ENCODE measurements at regions of chr6 and their contacts with region 1.

Region 1: DNA sequence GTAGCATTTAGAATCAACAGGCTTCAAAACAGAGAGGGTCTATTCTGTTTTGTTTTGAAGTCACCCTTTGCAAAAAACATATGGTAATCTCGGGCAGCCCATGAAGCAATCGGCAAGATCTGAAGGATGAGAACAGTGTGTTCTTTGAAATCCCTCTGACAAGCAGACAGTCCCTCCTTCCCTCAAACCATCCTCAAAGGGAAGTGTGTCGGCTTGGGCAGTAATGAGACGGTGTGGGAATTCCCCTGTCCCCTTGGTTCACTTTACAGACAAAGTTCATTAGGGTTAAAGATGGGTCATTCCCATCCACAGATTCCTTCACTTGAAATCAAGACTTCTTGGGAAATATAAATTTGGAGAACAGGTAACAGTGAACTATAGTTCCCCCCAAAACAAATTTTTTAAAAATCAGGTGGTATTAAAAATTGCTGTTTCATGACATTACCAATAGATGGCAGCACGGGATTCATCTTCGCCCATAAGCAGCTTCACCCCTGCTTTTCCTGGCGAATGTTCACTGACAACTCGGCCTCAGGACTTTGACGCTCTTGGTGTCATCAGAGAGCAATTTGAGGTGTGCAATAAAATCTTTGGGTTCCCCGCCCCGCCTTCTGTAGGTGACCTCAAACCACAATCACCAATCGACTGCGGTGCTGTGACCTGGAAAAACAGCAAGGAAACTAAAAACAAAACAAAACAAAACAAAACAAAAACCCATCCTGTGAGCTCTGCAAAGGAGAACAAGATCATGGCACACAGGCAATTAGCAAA is 159.3 kb upstream of the TNFAIP3 start:
- DNase-seq: peak; percentile 89
- H3K4me3 Mint-ChIP-seq: peak overlapping the region; percentile 58
- H3K27ac Mint-ChIP-seq: peak overlapping the region; percentile 86
- H3K4me1 Mint-ChIP-seq: peaks cover 58% of the 10 kb centered on the region
- H3K27me3 Mint-ChIP-seq: no peaks in the 10 kb centered on the region

Region 2: DNA sequence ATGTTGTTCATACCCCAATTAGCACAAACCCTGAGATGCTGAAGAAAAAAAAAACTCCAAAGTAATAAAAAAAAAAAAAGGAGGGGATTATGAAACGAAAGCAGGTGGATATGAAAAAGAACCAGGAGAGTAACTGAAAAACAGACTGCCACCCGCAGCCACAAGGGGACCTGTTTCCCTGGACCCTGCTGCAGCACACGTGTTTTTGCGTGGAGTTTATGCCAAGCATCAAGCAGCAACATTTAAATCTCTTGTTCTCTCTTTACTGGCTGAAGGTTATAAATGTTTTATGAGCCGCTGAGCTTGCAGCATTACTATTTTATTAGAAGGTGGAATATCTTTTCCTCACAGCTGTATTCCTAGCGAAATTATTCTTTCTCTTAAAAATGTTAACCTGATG is 82.0 kb before region 1 on chr6:
- CTCF ChIA-PET with region 1: no interaction called
- intact Hi-C with region 1: no loop called
- DNase-seq: no peak
- H3K4me3 Mint-ChIP-seq: no peak overlapping the region
- H3K27ac Mint-ChIP-seq: no peak overlapping the region
- H3K4me1 Mint-ChIP-seq: no peaks in the 10 kb centered on the region
- H3K27me3 Mint-ChIP-seq: peaks cover 6% of the 10 kb centered on the region

Region 3: GRCh38 chr6:137680705-137681346 is 26.9 kb before region 1 on chr6:
- CTCF ChIA-PET with region 1: interaction called, 6 read pairs
- intact Hi-C with region 1: loop called (anchors 1 kb)
- DNase-seq: no peak
- H3K4me3 Mint-ChIP-seq: no peak overlapping the region
- H3K27ac Mint-ChIP-seq: peak overlapping the region; percentile 84
- H3K4me1 Mint-ChIP-seq: peaks cover 54% of the 10 kb centered on the region
- H3K27me3 Mint-ChIP-seq: peaks cover 8% of the 10 kb centered on the region

Region 4: DNA sequence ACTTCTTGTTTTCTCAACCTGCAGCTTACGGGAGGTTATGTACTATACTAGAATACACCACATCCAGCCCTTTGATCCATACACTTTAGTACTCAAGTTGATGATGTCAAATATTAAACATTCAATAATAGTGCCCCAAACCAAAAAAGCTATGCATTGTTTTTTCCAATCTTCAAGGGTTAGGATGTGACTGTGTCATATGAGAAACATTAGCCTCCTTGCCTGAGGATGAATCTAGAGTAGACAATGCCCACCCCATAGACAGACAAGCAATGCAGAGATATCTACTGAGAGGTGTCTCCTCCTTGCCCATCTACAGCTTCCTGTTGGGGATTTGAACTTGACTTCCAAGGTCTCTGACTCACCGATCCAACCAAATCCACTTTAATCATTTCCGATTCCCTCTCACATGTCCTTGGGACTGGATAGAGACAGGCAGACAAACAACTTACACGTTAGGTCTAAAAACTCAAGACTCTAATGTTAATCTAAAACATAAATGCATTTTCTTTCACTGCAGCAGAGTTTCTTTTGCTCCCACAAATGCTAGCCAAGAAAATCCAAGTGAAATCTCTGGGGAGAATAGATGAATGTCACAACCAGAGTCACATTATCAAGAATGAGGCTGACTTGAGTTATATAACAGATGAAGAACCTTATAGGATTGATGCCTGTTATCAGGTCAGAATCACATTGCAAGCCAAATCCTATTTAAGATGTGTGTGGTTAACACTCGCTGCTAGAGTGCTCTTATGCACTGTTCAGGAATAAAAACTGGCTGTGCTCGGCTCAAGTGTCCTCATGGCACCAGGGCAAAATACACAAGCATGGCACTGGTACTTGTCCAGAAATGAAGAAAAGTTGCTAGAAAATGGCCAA is 83.7 kb after region 1 on chr6:
- CTCF ChIA-PET with region 1: interaction called, 5 read pairs
- intact Hi-C with region 1: loop called (anchors 1 kb)
- DNase-seq: no peak
- H3K4me3 Mint-ChIP-seq: no peak overlapping the region
- H3K27ac Mint-ChIP-seq: peak overlapping the region; percentile 5
- H3K4me1 Mint-ChIP-seq: peaks cover 51% of the 10 kb centered on the region
- H3K27me3 Mint-ChIP-seq: no peaks in the 10 kb centered on the region

Region 5: GRCh38 chr6:137823826-137824555 is 116.2 kb after region 1 on chr6:
- CTCF ChIA-PET with region 1: no interaction called
- intact Hi-C with region 1: loop called (anchors 1 kb)
- DNase-seq: peak; percentile 84
- H3K4me3 Mint-ChIP-seq: peak overlapping the region; percentile 67
- H3K27ac Mint-ChIP-seq: peak overlapping the region; percentile 95
- H3K4me1 Mint-ChIP-seq: peaks cover 81% of the 10 kb centered on the region
- H3K27me3 Mint-ChIP-seq: no peaks in the 10 kb centered on the region

Region 6: DNA sequence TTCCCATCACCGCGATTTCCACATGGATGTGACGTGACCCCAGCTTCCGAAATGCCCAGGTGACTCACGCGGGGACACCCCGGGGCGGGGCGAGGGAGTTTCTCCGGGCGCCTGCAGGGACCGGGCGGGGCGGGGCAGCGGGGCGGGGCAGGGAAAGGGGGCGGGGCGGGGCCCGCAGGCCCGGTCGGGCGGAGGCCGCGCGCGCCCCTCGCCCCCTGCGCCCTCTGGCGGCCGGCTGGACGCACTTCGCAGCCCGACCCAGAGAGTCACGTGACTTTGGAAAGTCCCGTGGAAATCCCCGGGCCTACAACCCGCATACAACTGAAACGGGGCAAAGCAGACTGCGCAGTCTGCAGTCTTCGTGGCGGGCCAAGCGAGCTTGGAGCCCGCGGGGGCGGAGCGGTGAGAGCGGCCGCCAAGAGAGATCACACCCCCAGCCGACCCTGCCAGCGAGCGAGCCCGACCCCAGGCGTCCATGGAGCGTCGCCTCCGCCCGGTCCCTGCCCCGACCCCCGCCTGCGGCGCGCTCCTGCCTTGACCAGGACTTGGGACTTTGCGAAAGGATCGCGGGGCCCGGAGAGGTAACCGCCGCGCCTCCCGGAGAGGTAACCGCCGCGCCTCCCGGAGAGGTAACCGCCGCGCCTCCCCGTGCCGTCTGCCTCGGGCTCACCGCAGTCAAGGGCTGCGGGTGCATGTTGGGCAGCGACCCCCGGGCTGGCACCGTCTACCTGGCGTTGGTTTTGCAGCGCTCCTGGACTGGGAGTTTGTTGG is 159.3 kb after region 1 on chr6 and contains the start of gene TNFAIP3:
- CTCF ChIA-PET with region 1: interaction called, 35 read pairs
- intact Hi-C with region 1: loop called (anchors 1 kb)
- DNase-seq: peak; percentile 97
- H3K4me3 Mint-ChIP-seq: peak within 1 kb of the TSS; percentile 89
- H3K27ac Mint-ChIP-seq: peak within 1 kb of the TSS; percentile 99
- H3K4me1 Mint-ChIP-seq: peaks cover 32% of the 10 kb centered on the region
- H3K27me3 Mint-ChIP-seq: no peaks in the 10 kb centered on the region
- total RNA-seq, gene TNFAIP3: 289 to 294 TPM

Region 7: DNA sequence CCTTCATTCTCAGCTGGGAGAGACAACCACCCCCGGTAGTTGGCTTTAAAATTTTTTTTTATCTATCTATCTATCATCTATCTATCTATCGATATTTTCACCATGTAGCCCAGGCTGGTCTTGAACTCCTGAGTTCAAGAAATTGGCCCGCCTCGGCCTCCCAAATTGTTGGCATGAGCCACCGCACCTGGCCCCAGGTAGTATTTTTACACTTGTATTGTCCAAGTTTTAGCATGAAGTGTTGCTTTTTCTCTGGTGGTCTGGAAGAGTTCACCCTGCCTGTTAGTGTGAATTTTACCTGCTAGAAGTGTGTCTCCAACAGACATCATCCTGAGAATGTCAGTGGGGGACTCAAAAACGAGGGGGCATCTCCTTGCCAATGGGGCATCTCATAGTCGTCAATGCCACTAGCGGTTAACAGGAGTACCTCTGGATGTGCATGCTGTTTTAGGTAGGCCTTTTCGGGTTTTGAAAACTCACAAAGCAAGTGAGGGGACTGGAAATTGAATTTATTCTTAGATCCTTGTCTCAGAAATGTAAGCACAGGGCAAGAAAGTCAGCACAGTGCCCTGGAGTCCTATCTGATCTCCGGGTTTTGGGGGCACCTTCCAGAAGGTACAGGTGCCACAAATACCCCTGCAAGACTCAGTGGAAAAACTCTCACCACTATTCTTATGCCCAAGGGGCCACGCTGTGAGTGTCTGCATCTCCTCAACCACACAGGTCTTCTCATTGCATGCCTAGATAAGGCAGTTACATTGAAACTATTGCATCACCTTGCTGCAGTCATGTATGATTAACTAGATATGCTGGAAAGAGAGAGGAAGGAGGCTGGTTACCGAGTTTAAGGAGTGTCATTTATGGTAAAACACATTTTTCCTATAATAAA is 196.4 kb after region 1 on chr6:
- CTCF ChIA-PET with region 1: no interaction called
- intact Hi-C with region 1: loop called (anchors 1 kb)
- DNase-seq: peak; percentile 77
- H3K4me3 Mint-ChIP-seq: peak overlapping the region; percentile 71
- H3K27ac Mint-ChIP-seq: peak overlapping the region; percentile 100
- H3K4me1 Mint-ChIP-seq: peaks cover 71% of the 10 kb centered on the region
- H3K27me3 Mint-ChIP-seq: no peaks in the 10 kb centered on the region

Region 8: GRCh38 chr6:138001750-138002349 is 294.1 kb after region 1 on chr6:
- CTCF ChIA-PET with region 1: interaction called, 25 read pairs
- intact Hi-C with region 1: loop called (anchors 1 kb)
- DNase-seq: peak; percentile 84
- H3K4me3 Mint-ChIP-seq: no peak overlapping the region
- H3K27ac Mint-ChIP-seq: no peak overlapping the region
- H3K4me1 Mint-ChIP-seq: peaks cover 16% of the 10 kb centered on the region
- H3K27me3 Mint-ChIP-seq: peaks cover 3% of the 10 kb centered on the region

Region 9: DNA sequence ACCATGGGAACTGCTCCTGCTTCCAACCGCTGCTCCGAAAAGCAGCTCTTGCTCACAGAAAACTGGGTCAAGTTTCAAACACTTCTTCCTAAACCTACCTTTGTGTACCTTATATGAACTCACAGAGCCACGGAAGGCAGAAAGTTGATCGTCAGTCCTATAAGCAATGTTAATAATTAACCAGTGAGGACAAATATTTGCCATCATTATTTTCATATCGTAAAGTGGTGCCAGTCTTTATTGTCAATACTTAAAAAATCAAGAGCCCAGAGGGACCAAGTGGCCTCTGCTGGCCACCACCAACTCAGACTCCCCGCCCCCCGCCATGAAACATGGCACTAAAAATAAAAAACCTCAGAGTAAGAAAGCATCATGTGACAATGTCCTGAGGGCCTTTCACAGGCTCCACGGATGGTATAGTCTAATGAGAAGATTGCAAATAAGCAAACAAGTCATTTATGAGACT is 519.6 kb after region 1 on chr6:
- CTCF ChIA-PET with region 1: no interaction called
- intact Hi-C with region 1: no loop called
- DNase-seq: no peak
- H3K4me3 Mint-ChIP-seq: no peak overlapping the region
- H3K27ac Mint-ChIP-seq: no peak overlapping the region
- H3K4me1 Mint-ChIP-seq: no peaks in the 10 kb centered on the region
- H3K27me3 Mint-ChIP-seq: no peaks in the 10 kb centered on the region